HepG2 (cell line): ENCODE measurements at regions of chr14 and their contacts with region 1.

Region 1: DNA sequence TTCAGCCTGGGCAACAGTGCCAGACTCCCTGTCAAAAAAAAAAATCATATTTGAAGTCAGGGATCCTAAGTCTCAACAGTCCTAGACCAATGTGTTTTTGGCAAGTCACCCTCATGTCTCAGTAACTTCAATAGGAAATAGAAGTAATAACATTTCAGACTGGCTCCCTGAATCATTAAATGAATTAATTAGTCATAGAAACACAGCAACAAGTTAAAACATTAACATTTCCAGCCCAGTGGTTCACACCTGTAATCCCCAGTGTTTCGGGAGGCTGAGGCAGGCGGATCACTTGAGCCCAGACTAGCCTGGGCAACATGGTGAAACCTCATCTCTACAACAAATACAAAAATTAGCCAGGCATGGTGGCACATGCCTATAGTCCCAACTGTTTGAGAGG is 125.2 kb downstream of the GTF2A1 start:
- DNase-seq: no peak
- ATAC-seq: no peak
- H3K4me3 ChIP-seq: no peak overlapping the region
- H3K27ac ChIP-seq: no peak overlapping the region
- H3K4me1 ChIP-seq: peaks cover 18% of the 10 kb centered on the region
- H3K27me3 ChIP-seq: no peaks in the 10 kb centered on the region
- CTCF ChIP-seq: no peak
- EP300 ChIP-seq: no peak
- POLR2A ChIP-seq: no peak
- RAD21 ChIP-seq: no peak

Region 2: DNA sequence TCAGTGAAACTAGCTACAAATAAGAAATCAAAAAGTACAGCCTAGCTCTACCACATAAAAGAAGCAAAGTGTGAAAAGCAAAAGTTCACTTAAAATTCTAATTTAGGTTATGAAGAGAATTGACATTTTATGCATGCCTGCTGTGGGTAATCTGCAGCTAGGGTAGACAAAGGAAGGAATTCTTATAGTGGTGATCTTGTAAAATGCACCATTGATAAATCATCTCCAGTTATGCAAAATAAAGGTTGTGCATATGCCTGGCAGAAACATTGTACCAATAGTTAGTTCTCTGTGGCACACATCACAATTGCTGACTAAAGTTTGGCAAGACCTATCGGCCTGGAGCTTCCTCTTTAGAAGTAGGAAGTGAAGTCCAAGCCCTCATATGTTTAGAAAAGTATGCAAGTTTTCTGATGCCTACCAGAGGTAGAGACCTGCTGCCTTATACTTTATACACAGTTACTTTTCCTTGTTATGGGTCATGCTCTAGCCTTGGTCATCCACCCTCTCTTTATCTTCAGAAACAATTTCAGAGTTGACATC is 61.8 kb before region 1 on chr14:
- CTCF ChIA-PET with region 1: no interaction called
- POLR2A ChIA-PET with region 1: no interaction called
- in situ Hi-C with region 1: no loop called
- intact Hi-C with region 1: no loop called
- DNase-seq: no peak
- ATAC-seq: no peak
- H3K4me3 ChIP-seq: no peak overlapping the region
- H3K27ac ChIP-seq: no peak overlapping the region
- H3K4me1 ChIP-seq: no peaks in the 10 kb centered on the region
- H3K27me3 ChIP-seq: no peaks in the 10 kb centered on the region
- CTCF ChIP-seq: no peak
- EP300 ChIP-seq: no peak
- POLR2A ChIP-seq: no peak
- RAD21 ChIP-seq: no peak

Region 3: DNA sequence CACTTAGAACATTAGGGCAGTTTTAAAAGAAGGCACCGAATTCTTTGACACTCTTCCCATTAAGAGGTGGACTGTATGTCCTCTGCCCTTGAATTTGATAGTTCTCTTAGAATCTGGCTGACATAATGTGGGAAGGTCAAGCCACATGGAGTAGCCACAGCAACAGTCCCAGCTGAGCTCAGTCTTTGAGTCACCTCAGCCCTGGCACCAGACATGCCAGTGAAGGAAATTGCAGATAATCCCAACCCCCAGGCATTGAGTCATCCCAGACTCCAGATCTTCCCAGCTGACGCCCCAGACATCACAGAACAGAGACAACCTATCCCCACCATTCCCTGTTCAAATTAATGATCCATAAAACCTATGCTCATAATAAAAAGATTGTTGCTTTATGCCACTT is 41.8 kb after region 1 on chr14:
- CTCF ChIA-PET with region 1: no interaction called
- POLR2A ChIA-PET with region 1: no interaction called
- in situ Hi-C with region 1: no loop called
- intact Hi-C with region 1: no loop called
- DNase-seq: no peak
- ATAC-seq: no peak
- H3K4me3 ChIP-seq: no peak overlapping the region
- H3K27ac ChIP-seq: no peak overlapping the region
- H3K4me1 ChIP-seq: peaks cover 10% of the 10 kb centered on the region; the same call in 1 of the 2 replicates
- H3K27me3 ChIP-seq: no peaks in the 10 kb centered on the region
- CTCF ChIP-seq: no peak
- EP300 ChIP-seq: no peak
- POLR2A ChIP-seq: no peak
- RAD21 ChIP-seq: no peak

Region 4: GRCh38 chr14:81164167-81164774 is 68.7 kb after region 1 on chr14:
- CTCF ChIA-PET with region 1: no interaction called
- POLR2A ChIA-PET with region 1: no interaction called
- in situ Hi-C with region 1: no loop called
- intact Hi-C with region 1: loop called (anchors 5 kb)
- DNase-seq: peak; percentile 78
- ATAC-seq: peak; percentile 94
- H3K4me3 ChIP-seq: no peak overlapping the region; a peak in 1 of 6 replicates
- H3K27ac ChIP-seq: no peak overlapping the region
- H3K4me1 ChIP-seq: peaks cover 45% of the 10 kb centered on the region
- H3K27me3 ChIP-seq: no peaks in the 10 kb centered on the region
- CTCF ChIP-seq: peak; percentile 90
- EP300 ChIP-seq: no peak
- POLR2A ChIP-seq: no peak
- RAD21 ChIP-seq: peak; percentile 57